Activated CD4-positive, alpha-beta T cell treated with anti-CD3 and anti-CD28 coated beads for 36 hours (primary cell): ENCODE measurements at regions of chr17 and their contacts with region 1.

Region 1: DNA sequence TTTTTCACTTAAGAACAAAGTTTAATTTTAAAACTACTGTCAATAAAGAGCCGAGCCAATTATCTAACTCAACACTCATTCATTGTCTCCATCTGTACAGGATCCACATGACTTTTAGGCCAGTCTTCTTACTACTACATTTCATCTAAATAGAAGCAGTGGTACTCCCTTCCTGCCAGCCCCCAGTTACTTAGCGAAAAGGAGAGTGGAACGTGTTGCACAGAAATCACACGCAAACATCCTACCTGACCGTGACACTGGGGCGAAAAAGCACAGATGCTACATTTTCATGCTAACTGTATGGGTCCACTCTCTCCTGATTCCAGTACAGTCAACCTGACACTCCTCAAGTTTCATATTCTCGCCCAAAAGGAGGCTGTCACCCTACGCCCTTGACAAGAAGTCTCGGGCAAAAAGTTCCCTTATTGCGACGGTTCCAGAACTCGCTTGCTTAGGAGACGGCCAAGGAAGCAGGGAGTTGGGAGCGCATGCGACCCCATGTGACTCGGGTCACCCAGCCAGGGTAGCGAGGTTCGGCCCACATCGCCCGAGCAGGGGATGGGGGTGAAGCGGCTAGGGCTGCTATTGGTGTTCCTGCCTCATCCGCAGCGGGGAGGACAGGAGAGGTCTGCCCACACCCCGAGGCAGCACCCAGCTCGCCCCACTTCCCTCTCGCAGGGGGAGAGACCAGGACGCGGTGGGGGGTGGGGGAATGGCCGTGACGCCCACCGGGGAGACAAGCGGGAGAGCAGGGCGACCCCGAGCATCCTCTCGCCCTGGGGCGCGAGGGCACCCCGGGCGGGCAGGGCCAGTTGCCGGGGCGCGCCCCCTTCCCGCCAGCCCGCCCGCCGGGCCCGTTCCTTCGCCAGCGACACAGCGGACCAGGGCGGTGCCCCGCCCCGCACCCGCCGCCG is 935 bp downstream of the GNA13 start:
- DNase-seq: peak; percentile 76
- ATAC-seq: peak; percentile 55
- H3K4me3 Mint-ChIP-seq: peak overlapping the region; percentile 93
- H3K27ac Mint-ChIP-seq: peak overlapping the region; percentile 94
- H3K4me1 Mint-ChIP-seq: peaks cover 43% of the 10 kb centered on the region
- H3K27me3 Mint-ChIP-seq: no peaks in the 10 kb centered on the region

Region 2: DNA sequence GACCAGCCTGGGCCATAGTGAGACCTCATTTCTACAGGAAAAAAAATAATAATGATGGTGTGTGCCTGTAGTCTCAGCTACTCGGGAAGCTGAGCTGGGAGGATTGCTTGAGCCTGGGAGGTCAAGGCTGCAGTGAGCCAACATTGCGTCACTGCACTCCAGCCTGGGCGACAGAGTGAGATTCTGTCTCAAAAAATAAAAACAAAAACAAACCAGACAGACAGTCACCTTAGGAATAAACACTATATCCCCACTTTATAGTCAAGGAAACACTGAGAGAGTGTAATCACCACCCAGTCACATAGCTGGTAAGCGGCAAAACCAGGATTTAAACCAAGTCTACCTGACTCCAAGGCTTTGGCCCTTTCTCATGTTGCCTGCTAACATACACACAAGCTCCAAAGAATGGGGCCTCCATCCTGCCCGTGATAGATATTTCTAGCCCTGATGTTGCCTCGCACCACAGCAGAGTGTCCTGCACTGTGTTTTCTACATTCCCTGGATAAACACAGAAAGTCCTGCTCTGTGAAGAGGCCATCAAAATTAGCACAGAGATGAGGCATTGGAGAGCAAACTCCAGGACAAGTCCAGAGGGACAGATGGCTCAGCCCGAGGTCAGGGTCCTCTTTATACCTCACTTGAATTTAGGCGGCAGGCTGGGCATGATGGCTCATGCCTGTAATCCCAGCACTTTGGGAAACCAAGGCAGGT is 327.4 kb before region 1 on chr17:
- CTCF ChIA-PET with region 1: no interaction called
- POLR2A ChIA-PET with region 1: no interaction called
- intact Hi-C with region 1: no loop called
- DNase-seq: no peak
- ATAC-seq: no peak
- H3K4me3 Mint-ChIP-seq: no peak overlapping the region
- H3K27ac Mint-ChIP-seq: no peak overlapping the region
- H3K4me1 Mint-ChIP-seq: no peaks in the 10 kb centered on the region
- H3K27me3 Mint-ChIP-seq: no peaks in the 10 kb centered on the region

Region 3: DNA sequence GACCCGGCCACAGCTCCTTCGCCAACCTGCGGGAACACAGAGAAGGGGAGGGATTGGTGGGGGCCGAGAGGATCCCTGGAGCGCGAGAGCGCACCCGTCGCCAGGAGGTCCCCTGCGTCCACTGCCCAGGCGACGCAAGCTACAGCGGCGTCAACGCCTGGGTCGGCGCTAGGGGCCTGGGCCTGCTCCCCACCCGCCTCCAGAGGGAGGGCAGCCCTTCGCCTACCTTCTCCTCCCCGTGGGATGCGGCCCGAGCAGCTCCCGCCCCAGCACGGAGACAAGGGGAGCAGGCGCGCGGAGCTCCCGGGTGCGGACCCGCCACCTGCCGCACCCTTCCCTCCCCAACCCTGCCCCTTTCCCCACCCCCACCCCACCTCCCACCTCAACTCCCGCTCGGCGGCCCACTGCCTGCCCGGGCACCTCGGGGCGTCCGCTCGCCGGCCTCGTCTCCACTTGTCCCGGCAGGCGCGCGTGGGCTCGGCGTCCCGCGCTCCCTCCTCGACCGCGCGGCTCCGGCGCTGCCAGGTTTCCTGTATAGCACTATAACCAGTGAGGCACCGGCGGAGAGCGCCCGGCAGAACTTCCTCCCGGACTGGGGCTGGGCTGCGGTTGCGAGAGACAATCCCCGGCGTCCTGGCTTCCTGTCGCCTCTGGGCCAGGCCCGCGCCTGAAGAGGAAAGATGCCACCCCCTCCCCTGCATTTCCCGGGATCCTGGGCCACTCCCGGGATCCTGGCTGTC is 274.4 kb before region 1 on chr17:
- CTCF ChIA-PET with region 1: no interaction called
- POLR2A ChIA-PET with region 1: interaction called, 4 read pairs
- intact Hi-C with region 1: loop called in 1 of 2 experiments (anchors 1 kb)
- DNase-seq: peak; percentile 71
- ATAC-seq: peak; percentile 28
- H3K4me3 Mint-ChIP-seq: peak overlapping the region; percentile 64
- H3K27ac Mint-ChIP-seq: no peak overlapping the region
- H3K4me1 Mint-ChIP-seq: peaks cover 34% of the 10 kb centered on the region
- H3K27me3 Mint-ChIP-seq: peaks cover 19% of the 10 kb centered on the region

Region 4: GRCh38 chr17:64975329-64976087 is 80.1 kb before region 1 on chr17:
- CTCF ChIA-PET with region 1: no interaction called
- POLR2A ChIA-PET with region 1: interaction called, 4 read pairs
- intact Hi-C with region 1: loop called (anchors 1 to 2 kb)
- DNase-seq: peak; percentile 97
- ATAC-seq: peak; percentile 80
- H3K4me3 Mint-ChIP-seq: peak overlapping the region; percentile 81
- H3K27ac Mint-ChIP-seq: peak overlapping the region; percentile 98
- H3K4me1 Mint-ChIP-seq: peaks cover 59% of the 10 kb centered on the region
- H3K27me3 Mint-ChIP-seq: no peaks in the 10 kb centered on the region

Region 5: GRCh38 chr17:65027305-65027704 is 28.3 kb before region 1 on chr17:
- CTCF ChIA-PET with region 1: interaction called, 6 read pairs
- POLR2A ChIA-PET with region 1: no interaction called
- intact Hi-C with region 1: loop called (anchors 1 kb)
- DNase-seq: peak; percentile 75
- ATAC-seq: peak; percentile 72
- H3K4me3 Mint-ChIP-seq: peak overlapping the region; percentile 60
- H3K27ac Mint-ChIP-seq: peak overlapping the region; percentile 91
- H3K4me1 Mint-ChIP-seq: peaks cover 81% of the 10 kb centered on the region
- H3K27me3 Mint-ChIP-seq: no peaks in the 10 kb centered on the region

Region 6: DNA sequence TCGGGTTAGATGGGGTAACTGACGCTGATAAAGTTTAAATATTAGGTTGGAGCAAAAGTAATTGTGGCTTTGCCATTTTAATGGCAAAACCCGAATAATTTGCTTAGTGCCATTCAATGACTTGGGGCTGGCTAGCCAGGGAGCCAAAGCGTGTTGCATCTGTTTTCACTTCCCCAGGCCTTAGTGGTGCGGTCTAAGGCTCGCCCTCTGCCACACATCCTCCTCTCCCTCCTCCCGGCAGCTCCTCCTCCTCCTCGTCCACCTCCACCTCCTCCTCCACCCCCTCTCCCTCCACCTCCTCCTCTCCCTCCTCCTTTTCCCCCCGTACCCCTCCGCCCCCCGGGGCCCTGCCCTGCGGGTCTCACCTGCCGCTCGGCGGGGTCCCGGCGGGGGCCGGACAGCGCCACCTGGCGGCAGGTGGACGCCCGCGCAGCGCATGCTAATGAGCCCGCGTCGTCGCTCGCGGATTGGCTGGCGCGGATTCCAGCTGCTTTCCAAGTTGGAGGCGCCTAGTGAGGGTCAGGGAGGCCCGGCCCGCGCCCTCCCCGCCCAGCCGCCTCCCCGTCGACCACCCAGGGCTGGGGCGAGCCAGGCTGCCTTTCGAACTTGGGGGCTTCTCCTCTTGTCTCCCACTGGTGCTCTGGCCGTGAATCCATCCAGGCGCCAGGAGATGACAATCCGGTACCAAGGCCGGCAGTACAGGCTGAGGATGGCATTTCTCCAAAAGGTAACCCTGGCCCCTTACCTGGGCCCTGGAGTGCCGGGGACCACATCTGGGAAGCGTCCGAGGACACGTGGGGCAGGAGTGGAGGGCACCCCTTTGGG is 44.9 kb after region 1 on chr17:
- CTCF ChIA-PET with region 1: interaction called, 4 read pairs
- POLR2A ChIA-PET with region 1: no interaction called
- intact Hi-C with region 1: loop called (anchors 1 kb)
- DNase-seq: peak; percentile 87
- ATAC-seq: peak; percentile 70
- H3K4me3 Mint-ChIP-seq: peak overlapping the region; percentile 78
- H3K27ac Mint-ChIP-seq: peak overlapping the region; percentile 96
- H3K4me1 Mint-ChIP-seq: peaks cover 24% of the 10 kb centered on the region
- H3K27me3 Mint-ChIP-seq: peaks cover 2% of the 10 kb centered on the region

Region 7: DNA sequence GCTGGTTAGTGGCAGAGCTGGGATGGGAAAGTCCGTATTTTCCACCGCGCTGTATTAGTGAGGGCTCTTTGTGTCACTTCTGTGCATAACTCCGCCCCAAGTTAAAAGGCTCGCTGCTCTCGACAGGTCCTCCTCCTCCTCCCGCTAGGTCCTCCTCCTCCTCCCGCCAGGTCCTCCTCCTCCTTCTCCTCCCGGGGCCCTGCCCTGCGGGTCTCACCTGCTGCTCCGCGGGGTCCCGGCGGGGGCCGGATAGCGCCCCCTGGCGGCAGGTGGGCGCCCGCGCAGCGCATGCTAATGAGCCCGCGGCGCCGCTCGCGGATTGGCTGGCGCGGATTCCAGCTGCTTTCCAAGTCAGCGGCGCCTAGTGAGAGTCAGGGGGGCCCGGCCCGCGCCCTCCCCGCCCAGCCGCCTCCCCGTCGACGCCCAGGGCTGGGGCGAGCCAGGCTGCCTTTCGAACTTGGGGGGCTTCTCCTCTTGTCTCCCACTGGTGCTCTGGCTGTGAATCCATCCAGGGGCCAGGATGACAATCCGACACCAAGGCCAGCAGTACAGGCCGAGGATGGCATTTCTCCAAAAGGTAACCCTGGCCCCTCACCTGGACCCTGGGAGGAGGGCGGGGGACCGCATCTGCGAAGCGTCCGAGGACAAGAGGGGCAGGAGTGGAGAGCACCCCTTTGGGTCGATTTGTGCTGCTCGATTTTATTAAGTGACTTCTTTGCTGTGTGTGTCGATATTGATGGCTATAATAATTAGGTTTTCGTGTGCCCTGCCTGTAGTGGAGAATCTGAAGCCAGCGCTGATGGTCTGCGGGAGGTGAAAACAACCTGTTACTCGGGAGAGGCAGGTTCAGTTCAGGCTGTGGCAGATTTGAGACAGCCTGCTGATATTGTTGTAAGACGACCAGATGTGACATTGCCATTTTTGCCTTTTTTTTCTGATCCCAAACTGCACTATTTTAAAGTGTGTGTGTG is 81.7 kb after region 1 on chr17 and contains the start of gene RGS9:
- CTCF ChIA-PET with region 1: no interaction called
- POLR2A ChIA-PET with region 1: interaction called, 3 read pairs
- intact Hi-C with region 1: loop called in 1 of 2 experiments (anchors 2 kb)
- DNase-seq: peak; percentile 89
- ATAC-seq: peak; percentile 95
- H3K4me3 Mint-ChIP-seq: peak within 1 kb of the TSS; percentile 42
- H3K27ac Mint-ChIP-seq: peak within 1 kb of the TSS; percentile 62
- H3K4me1 Mint-ChIP-seq: peaks cover 14% of the 10 kb centered on the region
- H3K27me3 Mint-ChIP-seq: peaks cover 10% of the 10 kb centered on the region
- total RNA-seq, gene RGS9: 1.6 to 1.8 TPM

Region 8: DNA sequence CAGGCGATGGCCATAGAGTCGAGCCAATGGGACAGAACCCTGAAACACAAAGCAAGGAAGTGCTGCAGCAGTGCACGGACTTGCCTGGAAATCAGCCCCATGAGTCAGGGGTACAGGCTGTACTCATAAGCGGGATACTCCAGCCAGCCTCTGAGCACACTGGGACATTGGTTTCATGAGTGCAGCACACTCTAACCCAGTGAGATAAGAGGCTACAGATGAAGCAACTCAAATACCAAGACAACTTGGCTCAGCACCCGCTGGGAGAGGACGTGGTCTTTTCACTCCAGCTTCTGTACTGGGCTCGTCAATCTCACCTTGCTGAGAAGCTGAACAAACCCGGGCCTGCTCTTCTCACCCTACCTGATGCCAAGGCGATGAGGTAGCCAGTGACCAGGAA is 407.6 kb after region 1 on chr17:
- CTCF ChIA-PET with region 1: no interaction called
- POLR2A ChIA-PET with region 1: no interaction called
- intact Hi-C with region 1: no loop called
- DNase-seq: no peak
- ATAC-seq: no peak
- H3K4me3 Mint-ChIP-seq: no peak overlapping the region
- H3K27ac Mint-ChIP-seq: no peak overlapping the region
- H3K4me1 Mint-ChIP-seq: no peaks in the 10 kb centered on the region
- H3K27me3 Mint-ChIP-seq: peaks cover 2% of the 10 kb centered on the region

Region 9: GRCh38 chr17:66301797-66302741 is 1246.5 kb after region 1 on chr17 and contains the start of gene PRKCA:
- CTCF ChIA-PET with region 1: no interaction called
- POLR2A ChIA-PET with region 1: no interaction called
- intact Hi-C with region 1: loop called in 1 of 2 experiments (anchors 10 kb)
- DNase-seq: peak; percentile 85
- ATAC-seq: peak; percentile 59
- H3K4me3 Mint-ChIP-seq: peak within 1 kb of the TSS; percentile 97
- H3K27ac Mint-ChIP-seq: peak within 1 kb of the TSS; percentile 100
- H3K4me1 Mint-ChIP-seq: peaks cover 42% of the 10 kb centered on the region
- H3K27me3 Mint-ChIP-seq: no peaks in the 10 kb centered on the region
- total RNA-seq, gene PRKCA: 73.3 to 77.0 TPM